ENCODE measurements at regions of chr5 and their contacts with region 1.

Region 1: DNA sequence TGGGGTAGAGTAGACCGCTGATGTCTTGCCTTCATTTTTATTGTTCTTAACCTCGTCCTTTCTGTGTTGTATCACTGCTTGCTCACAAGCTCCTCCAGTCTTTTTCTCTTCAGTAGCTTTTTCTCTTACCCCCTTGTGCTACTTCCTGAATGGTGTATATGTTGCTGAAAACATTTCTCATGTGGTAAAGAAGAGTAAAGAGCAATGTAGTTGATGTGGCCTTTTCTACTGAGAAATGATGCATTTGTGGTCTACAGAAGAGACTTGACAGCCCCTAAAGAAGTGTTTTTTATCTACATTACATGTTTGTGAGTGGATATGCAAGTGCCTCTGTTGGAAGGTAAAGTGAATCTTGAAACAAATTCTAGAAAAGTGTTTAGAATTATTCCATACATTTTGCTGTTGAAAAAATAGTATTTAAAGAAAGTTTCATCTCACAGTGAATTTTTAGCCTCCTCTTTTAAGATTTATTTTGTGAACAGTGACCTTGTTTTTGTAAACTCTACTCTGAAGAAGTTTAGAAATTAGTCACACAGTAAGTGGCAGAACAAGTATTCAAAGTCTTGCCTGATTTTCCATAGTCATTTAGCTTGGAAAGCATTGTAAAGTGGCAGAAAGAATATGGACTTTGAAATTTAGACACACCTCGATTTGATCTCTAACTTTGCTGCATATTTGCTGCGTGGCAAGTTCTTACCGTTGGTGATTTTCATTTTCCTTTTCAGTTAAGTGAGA is 17.4 kb downstream of the CDC42SE2 start:
- DNase-seq: peak; percentile 85
- H3K4me3 Mint-ChIP-seq: peak overlapping the region; percentile 87
- H3K27ac Mint-ChIP-seq: peak overlapping the region; percentile 91
- H3K4me1 Mint-ChIP-seq: peaks cover 71% of the 10 kb centered on the region
- H3K27me3 Mint-ChIP-seq: no peaks in the 10 kb centered on the region

Region 2: DNA sequence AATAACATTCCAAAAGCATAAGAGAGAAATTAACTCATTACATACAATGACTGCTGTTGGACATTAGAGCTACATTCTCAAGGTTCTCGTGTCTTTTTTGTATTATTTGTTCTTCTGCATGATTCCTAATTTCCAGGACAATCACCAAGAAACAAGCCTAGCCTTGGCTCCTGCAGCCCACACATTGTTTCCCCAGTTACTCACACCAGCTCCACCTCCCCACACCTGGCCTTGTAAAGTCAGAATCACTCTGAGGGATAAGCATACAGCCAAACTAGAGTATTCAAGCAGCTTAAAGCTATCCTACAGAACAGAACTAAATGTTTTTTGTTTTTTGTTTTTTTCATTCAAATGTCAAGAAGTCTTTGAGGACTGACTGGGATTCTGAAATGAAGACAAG is 305.5 kb before region 1 on chr5:
- intact Hi-C with region 1: no loop called
- DNase-seq: no peak
- H3K4me3 Mint-ChIP-seq: no peak overlapping the region
- H3K27ac Mint-ChIP-seq: no peak overlapping the region
- H3K4me1 Mint-ChIP-seq: no peaks in the 10 kb centered on the region
- H3K27me3 Mint-ChIP-seq: peaks cover 6% of the 10 kb centered on the region

Region 3: GRCh38 chr5:131081374-131081773 is 199.9 kb before region 1 on chr5:
- intact Hi-C with region 1: no loop called
- DNase-seq: no peak
- H3K4me3 Mint-ChIP-seq: no peak overlapping the region
- H3K27ac Mint-ChIP-seq: no peak overlapping the region
- H3K4me1 Mint-ChIP-seq: peaks cover 14% of the 10 kb centered on the region
- H3K27me3 Mint-ChIP-seq: peaks cover 10% of the 10 kb centered on the region

Region 4: DNA sequence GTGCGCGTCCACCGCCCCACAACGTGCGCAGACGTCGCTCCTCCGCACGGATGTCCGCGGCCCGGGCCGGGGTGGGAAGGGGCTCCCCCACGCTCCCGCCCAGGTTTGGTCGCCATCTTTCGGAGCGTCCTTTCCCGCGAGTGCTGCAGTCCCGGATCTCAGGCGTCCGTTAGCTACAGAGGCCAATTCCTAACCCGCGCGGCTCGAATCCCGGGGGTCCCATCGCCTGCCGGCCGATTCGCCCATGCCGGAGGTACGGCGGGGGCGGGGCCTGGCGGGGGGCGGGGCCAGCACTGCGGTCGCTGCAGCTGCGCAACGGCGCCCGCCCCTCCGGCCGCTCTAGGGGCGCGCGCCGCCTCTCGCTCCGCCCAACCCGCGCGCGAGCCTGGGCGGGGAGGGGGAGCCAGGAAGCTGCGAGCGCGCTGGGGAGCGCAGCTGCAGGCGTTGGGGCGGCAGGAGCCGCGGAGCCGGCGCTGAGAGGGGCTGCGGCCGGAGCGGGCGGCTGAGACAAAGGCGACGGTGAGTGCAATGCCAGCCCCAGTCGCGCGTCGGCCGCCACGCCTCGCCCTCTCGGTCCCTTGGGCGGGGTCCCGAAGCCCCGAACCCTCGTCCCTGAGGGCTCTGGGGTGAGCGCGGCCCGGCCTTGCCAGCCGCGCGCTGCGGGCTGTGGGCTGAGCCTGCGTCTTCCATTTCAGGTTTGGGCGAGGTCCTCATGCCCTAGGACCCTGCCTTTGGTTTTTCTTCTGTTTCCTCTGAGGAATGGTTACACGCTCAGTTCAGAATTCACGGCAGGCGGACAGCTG is 17.5 kb before region 1 on chr5 and contains the start of gene CDC42SE2:
- intact Hi-C with region 1: loop called (anchors 1 kb)
- DNase-seq: peak; percentile 97
- H3K4me3 Mint-ChIP-seq: peak within 1 kb of the TSS; percentile 85
- H3K27ac Mint-ChIP-seq: peak within 1 kb of the TSS; percentile 93
- H3K4me1 Mint-ChIP-seq: peaks cover 34% of the 10 kb centered on the region
- H3K27me3 Mint-ChIP-seq: no peaks in the 10 kb centered on the region
- total RNA-seq, gene CDC42SE2: 96.2 and 99.0 TPM in 2 replicates

Region 5: GRCh38 chr5:131270809-131271208 is 10.5 kb before region 1 on chr5:
- intact Hi-C with region 1: loop called (anchors 1 kb)
- DNase-seq: no peak
- H3K4me3 Mint-ChIP-seq: peak overlapping the region; percentile 74
- H3K27ac Mint-ChIP-seq: peak overlapping the region; percentile 90
- H3K4me1 Mint-ChIP-seq: peaks cover 47% of the 10 kb centered on the region
- H3K27me3 Mint-ChIP-seq: no peaks in the 10 kb centered on the region

Region 6: DNA sequence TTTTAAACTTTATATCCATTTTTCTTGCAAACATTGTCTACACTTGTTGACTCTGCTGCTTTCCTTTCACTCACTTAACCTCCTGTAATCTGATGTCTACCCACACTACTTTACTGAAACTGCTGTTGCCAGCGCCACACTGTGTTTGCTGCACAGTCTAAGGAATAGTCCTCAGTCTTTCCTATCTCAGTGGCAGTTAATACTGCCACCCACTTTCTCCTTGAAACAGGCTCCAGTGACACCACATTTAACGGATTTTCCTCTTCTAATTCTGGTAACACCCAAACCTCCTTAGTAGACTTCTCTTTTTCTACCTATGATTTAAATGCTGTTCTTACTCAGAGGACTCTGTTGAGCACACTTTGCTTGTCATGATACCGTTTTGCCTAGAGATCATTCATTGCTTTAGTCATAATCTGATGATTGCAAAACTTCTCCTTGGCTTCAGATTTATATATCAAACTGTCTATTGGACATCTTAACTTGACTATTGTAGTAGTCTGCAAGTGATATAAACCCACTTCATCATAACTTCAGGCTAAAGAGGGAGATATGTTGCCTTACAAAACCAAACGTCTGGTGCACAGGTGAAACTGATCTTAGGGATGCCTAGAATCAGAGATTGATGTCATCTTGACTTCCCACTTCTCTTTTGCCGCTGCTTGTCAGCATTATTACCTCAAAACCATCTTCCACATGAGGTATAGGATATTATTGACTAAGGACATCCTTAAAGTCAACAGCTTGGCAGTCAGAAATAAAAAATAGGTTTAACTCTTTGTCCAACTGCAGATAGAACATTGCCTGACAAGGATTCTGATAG is 76.7 kb after region 1 on chr5:
- intact Hi-C with region 1: loop called (anchors 1 kb)
- DNase-seq: peak; percentile 80
- H3K4me3 Mint-ChIP-seq: peak overlapping the region; percentile 49
- H3K27ac Mint-ChIP-seq: peak overlapping the region; percentile 81
- H3K4me1 Mint-ChIP-seq: peaks cover 45% of the 10 kb centered on the region
- H3K27me3 Mint-ChIP-seq: no peaks in the 10 kb centered on the region

Region 7: GRCh38 chr5:131536211-131536826 is 255.0 kb after region 1 on chr5:
- intact Hi-C with region 1: loop called (anchors 10 kb)
- DNase-seq: peak; percentile 72
- H3K4me3 Mint-ChIP-seq: peak overlapping the region; percentile 65
- H3K27ac Mint-ChIP-seq: peak overlapping the region; percentile 79
- H3K4me1 Mint-ChIP-seq: peaks cover 61% of the 10 kb centered on the region
- H3K27me3 Mint-ChIP-seq: no peaks in the 10 kb centered on the region

Measured in activated CD4-positive, alpha-beta T cell treated with anti-CD3 and anti-CD28 coated beads, Interleukin-2, amount 10 ng/mL, durations not matched to agents 24 days and 14 days (primary cell).